ENCODE measurements at regions of chr4 and their contacts with region 1.

Region 1: GRCh38 chr4:2761035-2761923 is 5.1 kb upstream of the TNIP2 start:
- DNase-seq: no peak
- ATAC-seq: no peak

Region 2: GRCh38 chr4:2843263-2843940 is 82.1 kb after region 1 on chr4 and contains the start of gene ADD1:
- intact Hi-C with region 1: loop called (anchors 10 kb)
- DNase-seq: peak; percentile 94
- ATAC-seq: peak; percentile 98
- total RNA-seq, gene ADD1: 217 TPM

Region 3: DNA sequence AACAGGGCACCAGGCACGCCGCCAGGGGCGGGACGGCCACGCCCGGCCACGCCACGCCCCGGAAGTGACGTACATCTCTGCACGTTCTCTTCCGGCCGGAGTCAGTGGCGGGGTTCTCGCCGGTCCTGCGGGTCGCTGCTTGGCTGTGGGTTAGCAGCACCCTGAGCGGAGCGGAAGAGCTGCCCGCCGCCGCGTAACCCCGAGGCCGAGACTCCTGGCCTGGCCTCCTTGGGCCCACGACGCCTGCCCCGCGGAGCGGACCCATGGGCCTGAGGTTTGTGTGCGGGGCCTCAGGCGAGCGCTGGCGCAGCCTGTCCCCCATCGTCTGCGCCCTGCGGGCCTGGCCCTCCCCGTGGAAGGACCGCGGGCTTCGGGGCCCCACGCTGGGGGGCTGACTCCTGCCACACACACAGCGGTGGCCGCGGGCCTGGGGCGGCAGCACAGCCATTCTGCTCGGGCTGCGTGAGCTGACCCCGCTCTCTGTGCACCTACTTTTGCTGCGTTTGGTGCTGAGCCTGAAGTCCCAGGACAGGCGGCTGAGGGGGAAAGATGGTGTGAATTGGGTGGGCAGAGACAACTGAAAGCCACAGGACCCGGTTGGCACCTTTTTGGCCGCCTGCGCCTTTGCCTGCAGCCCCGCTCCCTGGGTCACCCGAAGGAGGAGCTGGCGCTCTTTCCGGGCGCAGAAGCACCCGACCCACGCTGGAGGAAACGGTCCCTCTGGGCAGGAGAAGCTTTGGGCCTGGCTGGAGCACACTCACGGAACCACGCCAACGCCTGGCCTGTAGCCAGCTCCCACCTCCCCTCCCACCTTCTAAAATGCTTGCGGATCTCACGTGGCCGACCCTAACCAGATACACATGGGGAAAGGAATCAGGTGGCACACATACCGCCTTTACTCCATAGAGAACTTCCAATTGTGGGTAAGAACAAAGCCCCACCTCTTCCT is 173.8 kb after region 1 on chr4:
- intact Hi-C with region 1: loop called (anchors 10 kb)
- DNase-seq: peak; percentile 97
- ATAC-seq: peak; percentile 90